Aorta (tissue), 5 donors: ENCODE measurements at regions of chr18 and their contacts with region 1.

Region 1: GRCh38 chr18:9951022-9951859 is 37.4 kb downstream of the VAPA start:
- DNase-seq: no peak
- ATAC-seq: peak; percentile 78
- H3K4me3 ChIP-seq: no peak overlapping the region
- H3K27ac ChIP-seq: no peak overlapping the region
- H3K4me1 ChIP-seq: no peaks in the 10 kb centered on the region
- H3K27me3 ChIP-seq: no peaks in the 10 kb centered on the region

Region 2: GRCh38 chr18:9683407-9684396 is 267.5 kb before region 1 on chr18:
- intact Hi-C with region 1: loop called in 1 of 2 experiments (anchors 10 kb)
- DNase-seq: peak in 1 of 2 donors; percentile 58
- ATAC-seq: peak; percentile 81
- H3K4me3 ChIP-seq: no peak overlapping the region
- H3K27ac ChIP-seq: peak overlapping the region; percentile 59 to 85
- H3K4me1 ChIP-seq: peaks cover 0 to 3% of the 10 kb centered on the region in 2 donors
- H3K27me3 ChIP-seq: no peaks in the 10 kb centered on the region

Region 3: GRCh38 chr18:9731380-9731779 is 219.9 kb before region 1 on chr18:
- intact Hi-C with region 1: no loop called
- DNase-seq: no peak
- ATAC-seq: no peak
- H3K4me3 ChIP-seq: no peak overlapping the region
- H3K27ac ChIP-seq: no peak overlapping the region
- H3K4me1 ChIP-seq: no peaks in the 10 kb centered on the region
- H3K27me3 ChIP-seq: no peaks in the 10 kb centered on the region

Region 4: GRCh38 chr18:9894454-9895068 is 56.7 kb before region 1 on chr18:
- intact Hi-C with region 1: no loop called
- DNase-seq: no peak
- ATAC-seq: no peak
- H3K4me3 ChIP-seq: no peak overlapping the region
- H3K27ac ChIP-seq: no peak overlapping the region
- H3K4me1 ChIP-seq: no peaks in the 10 kb centered on the region
- H3K27me3 ChIP-seq: no peaks in the 10 kb centered on the region

Region 5: DNA sequence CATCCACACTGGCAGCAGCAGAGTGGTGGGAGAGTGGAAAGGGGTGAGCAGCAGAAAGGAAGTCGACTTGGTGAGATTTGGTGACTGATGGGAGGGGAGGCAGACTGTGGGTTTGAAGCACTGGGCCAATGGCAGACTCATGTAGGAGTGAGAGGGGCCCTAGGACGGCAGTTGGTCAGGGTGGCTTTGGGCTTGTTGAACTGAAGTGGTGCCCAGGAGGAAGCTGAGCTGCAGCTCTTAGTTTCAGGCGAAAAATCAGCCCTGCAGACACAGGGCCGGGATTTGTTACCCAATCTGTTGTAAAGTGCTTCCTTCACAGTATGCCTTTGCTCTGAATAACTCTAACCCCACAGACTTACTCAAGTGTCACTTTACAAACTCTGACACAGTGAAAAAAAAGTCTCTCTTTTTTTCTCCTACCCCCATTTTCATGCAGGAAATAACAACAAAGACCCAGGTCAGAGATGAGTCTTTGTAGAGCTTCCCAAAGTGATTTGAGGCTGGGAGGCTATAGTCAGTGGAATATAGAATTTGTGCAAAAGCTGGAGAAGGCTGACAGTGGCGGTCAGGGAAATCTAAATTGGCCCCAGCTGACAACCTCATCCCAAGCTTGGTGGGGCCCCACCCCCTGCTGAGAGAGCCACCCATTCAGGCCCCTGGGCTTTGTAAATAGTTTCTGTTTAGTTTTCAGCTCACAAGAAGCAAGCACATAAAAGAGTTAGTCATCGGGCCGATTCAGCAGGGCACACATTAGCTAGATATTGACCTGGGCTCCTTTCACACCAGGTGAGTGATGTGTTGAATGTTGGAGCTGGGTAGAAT is 189.4 kb after region 1 on chr18:
- intact Hi-C with region 1: no loop called
- DNase-seq: no peak
- ATAC-seq: no peak
- H3K4me3 ChIP-seq: no peak overlapping the region
- H3K27ac ChIP-seq: no peak overlapping the region
- H3K4me1 ChIP-seq: no peaks in the 10 kb centered on the region
- H3K27me3 ChIP-seq: no peaks in the 10 kb centered on the region